ENCODE measurements at regions of chr4 and their contacts with region 1.

Region 1: DNA sequence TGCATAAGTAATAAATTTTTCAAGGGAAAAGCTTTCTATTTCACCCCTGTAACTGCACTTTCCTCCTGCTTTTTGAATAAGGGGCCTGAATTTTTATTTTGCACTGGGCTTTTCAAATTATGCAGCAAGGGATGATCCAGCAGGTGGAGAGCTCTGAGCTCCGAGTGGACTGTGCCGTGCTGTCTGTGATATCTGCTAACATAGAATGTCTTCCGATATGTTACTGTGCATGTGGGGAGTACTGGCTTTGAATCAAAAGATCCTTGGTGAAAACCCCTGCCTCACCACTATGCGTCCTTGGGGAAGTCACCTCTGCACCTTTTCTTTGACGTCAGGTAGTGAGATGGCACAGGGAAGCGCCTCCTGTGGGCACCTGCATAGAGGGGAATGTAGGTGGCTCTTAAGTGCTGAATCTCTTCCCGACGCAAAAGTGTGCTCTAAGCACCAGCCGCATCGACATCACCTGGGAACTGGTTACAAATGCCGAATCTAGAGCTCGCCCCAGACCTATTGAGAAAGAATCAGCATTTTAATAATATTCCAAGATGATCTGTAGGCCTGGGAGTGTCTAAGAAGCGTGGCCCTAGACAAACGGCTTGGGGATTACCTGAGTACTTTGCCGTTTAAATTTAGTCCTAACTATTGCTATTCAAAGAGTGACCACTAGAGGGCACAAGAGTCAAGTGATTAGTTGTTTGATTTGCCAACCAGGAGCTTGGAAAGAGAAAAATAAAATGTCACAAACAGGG is 19.2 kb upstream of the WFS1 start:
- DNase-seq: no peak
- H3K4me3 ChIP-seq: no peak overlapping the region
- H3K27ac ChIP-seq: no peak overlapping the region
- H3K4me1 ChIP-seq: peaks cover 5% of the 10 kb centered on the region
- H3K27me3 ChIP-seq: peaks cover 52% of the 10 kb centered on the region
- CTCF ChIP-seq: peak; percentile 84

Region 2: DNA sequence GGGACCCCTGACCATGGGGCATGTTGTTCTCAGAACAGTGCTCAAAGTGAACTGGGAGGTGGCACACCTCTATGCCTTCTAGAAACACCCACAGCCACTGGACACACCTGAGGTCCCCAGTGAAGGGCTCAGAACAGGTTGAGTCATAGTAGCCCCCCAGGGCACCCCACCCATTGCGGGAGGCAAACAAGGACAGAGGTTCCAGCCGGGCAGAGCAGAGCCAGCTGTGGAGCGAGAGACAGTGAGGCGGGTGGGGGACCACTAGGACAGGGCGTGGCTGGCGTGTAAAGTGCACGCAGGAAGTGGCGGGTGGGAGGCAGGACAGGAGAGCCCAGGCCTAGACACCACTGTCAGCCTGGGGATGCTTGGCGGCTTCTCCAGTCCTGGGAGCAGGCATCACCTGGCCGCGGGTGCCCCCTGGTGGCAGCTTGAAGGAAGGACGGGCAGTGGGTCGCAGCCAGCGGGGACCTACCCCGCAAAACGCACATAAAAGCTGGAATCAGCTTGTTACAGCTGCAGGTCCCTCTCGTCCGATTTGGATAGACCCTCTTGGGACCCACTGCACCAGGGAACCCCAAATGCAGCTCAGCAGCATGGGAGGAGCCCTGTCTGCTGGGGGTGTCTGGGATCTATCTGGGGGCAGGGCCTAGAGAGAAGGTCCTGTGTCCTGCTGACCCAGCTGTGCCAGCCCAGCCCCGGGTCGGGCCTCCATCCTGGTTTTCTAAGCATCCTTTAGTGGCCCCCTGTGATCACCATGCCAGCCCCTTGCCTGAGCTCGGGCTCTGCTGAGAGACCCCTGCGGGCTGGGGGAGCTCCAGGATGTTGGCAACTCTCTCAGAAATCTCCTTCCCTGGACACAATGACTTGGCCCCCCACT is 76.9 kb after region 1 on chr4:
- intact Hi-C with region 1: loop called (anchors 5 kb)
- DNase-seq: peak; percentile 80
- H3K4me3 ChIP-seq: no peak overlapping the region
- H3K27ac ChIP-seq: no peak overlapping the region
- H3K4me1 ChIP-seq: peaks cover 18% of the 10 kb centered on the region
- H3K27me3 ChIP-seq: peaks cover 26% of the 10 kb centered on the region
- CTCF ChIP-seq: peak; percentile 97